CD8-positive, alpha-beta memory T cell (primary cell): ENCODE measurements at regions of chr2 and their contacts with region 1.

Region 1: DNA sequence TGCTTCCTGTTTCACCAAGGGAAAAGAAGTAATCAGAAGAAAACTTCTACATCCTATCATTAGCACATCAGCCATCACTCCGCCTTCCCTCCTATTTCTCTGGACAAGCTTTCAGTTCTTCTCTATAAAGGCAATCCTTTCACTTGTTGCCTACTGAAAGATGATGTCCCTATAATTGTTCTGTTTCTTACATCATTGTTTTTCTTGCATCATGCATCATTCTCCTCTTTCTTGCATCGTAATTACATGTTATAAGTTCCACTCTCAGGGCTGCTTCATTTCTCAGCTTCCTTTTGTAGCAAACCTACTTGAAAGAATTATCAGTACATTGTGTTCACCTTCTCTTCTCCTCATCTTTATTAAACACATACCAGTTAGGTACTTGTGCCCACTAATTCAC is 7.2 kb downstream of the SLC30A6 start:
- DNase-seq: no peak
- H3K4me3 ChIP-seq: no peak overlapping the region
- H3K4me3 Mint-ChIP-seq: peak overlapping the region in 1 of 7 donors; percentile 31
- H3K27ac ChIP-seq: no peak overlapping the region
- H3K27ac Mint-ChIP-seq: peak overlapping the region in 4 of 8 donors; percentile 2 to 72 (median 43)
- H3K4me1 ChIP-seq: no peaks in the 10 kb centered on the region
- H3K4me1 Mint-ChIP-seq: peaks cover 21 to 36% (median 34%) of the 10 kb centered on the region in 3 donors
- H3K27me3 ChIP-seq: no peaks in the 10 kb centered on the region
- H3K27me3 Mint-ChIP-seq: no peaks in the 10 kb centered on the region

Region 2: GRCh38 chr2:32264422-32265105 is 91.7 kb after region 1 on chr2 and contains the start of gene NLRC4:
- CTCF ChIA-PET with region 1: no interaction called
- POLR2A ChIA-PET with region 1: interaction called, 12 read pairs
- DNase-seq: no peak
- H3K4me3 ChIP-seq: no peak within 1 kb of the TSS
- H3K4me3 Mint-ChIP-seq: no peak within 1 kb of the TSS
- H3K27ac ChIP-seq: no peak within 1 kb of the TSS
- H3K27ac Mint-ChIP-seq: peak within 1 kb of the TSS in 2 of 8 donors; percentile 3 to 38
- H3K4me1 ChIP-seq: no peaks in the 10 kb centered on the region
- H3K4me1 Mint-ChIP-seq: peaks cover 0 to 6% (median 2%) of the 10 kb centered on the region in 3 donors
- H3K27me3 ChIP-seq: no peaks in the 10 kb centered on the region
- H3K27me3 Mint-ChIP-seq: peaks cover 8 to 10% of the 10 kb centered on the region in 2 donors
- total RNA-seq, gene NLRC4: 0.07 to 0.16 TPM